Activated CD4-positive, alpha-beta memory T cell treated with anti-CD3 and anti-CD28 coated beads for 36 hours (primary cell): ENCODE measurements at regions of chr15 and their contacts with region 1.

Region 1: DNA sequence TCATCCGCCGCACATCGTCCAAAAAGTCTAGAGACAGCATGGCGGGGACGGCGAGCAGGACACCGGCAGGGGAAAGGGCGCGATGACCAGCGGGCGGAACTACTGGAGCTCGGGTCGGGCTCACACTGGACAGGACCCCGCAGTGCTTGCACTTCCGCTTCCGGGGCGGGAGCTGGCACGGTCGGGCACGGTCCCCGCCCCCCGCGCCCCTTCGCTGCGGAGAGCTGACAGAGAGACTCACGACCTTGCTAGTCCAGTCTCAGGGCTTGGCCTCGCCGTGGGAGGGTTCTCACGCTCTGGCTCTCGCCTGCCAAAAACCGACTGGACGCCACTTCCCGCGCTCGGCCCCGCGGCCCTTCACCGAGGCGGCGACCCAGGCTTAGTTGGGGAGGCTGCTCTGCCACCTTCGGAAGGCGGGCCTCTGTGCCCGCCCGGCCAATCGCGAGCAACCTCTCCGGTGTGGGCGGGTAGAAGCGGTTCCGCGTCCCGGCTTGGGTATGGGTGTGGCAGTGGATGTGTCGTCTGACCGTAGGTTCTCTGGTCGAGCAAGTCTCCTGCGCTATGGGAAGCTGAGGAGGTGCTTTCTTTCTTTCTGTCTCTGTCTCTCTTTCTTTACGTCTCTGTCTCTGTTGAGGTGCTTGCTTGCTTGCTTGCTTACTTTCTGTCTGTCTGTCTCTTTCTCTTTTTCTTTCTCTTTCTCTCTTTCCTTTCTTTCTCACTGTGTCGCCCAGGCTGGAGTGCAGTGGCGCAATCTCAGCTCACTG is at the start of gene SEC11A:
- DNase-seq: peak; percentile 96
- H3K4me3 Mint-ChIP-seq: peak within 1 kb of the TSS; percentile 92
- H3K27ac Mint-ChIP-seq: peak within 1 kb of the TSS; percentile 93
- H3K4me1 Mint-ChIP-seq: peaks cover 46% of the 10 kb centered on the region
- H3K27me3 Mint-ChIP-seq: no peaks in the 10 kb centered on the region
- total RNA-seq, gene SEC11A: 132 to 136 TPM

Region 2: DNA sequence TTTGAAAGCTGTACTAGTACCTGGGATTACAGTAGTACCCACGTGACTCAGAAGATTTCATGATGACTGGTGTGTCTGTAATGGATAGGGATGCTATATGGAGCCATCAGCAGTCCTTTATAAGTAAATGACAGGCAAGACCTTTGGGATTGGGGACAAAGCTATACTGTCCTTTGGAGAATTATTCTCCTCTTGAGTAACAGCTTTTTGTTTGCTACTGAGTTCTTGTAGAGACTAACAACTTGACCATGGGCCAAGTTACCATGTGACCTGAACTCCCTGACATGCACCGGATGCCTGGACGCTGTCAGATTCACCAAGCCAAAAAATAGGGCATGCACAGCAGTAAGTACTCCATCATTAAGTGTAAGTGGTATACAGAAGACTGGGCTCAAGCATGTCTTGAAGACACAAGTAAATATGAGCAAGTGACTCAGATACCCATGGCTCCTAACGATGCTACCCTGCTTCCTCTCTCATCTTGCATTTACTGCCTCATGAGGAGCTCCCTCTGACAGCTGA is 13.2 kb before region 1 on chr15:
- CTCF ChIA-PET with region 1: no interaction called
- POLR2A ChIA-PET with region 1: interaction called, 10 read pairs
- intact Hi-C with region 1: no loop called
- DNase-seq: no peak
- H3K4me3 Mint-ChIP-seq: no peak overlapping the region
- H3K27ac Mint-ChIP-seq: peak overlapping the region; percentile 7
- H3K4me1 Mint-ChIP-seq: peaks cover 67% of the 10 kb centered on the region
- H3K27me3 Mint-ChIP-seq: no peaks in the 10 kb centered on the region

Region 3: GRCh38 chr15:84748274-84749110 is 32.3 kb after region 1 on chr15 and contains the start of gene ZNF592:
- CTCF ChIA-PET with region 1: interaction called, 10 read pairs
- POLR2A ChIA-PET with region 1: interaction called, 10 read pairs
- intact Hi-C with region 1: loop called (anchors 1 kb)
- DNase-seq: peak; percentile 84
- H3K4me3 Mint-ChIP-seq: peak within 1 kb of the TSS; percentile 97
- H3K27ac Mint-ChIP-seq: peak within 1 kb of the TSS; percentile 98
- H3K4me1 Mint-ChIP-seq: peaks cover 57% of the 10 kb centered on the region
- H3K27me3 Mint-ChIP-seq: no peaks in the 10 kb centered on the region
- total RNA-seq, gene ZNF592: 23.8 to 24.3 TPM

Region 4: GRCh38 chr15:84761607-84762131 is 45.5 kb after region 1 on chr15:
- CTCF ChIA-PET with region 1: no interaction called
- POLR2A ChIA-PET with region 1: no interaction called
- intact Hi-C with region 1: loop called (anchors 1 kb)
- DNase-seq: no peak
- H3K4me3 Mint-ChIP-seq: no peak overlapping the region
- H3K27ac Mint-ChIP-seq: no peak overlapping the region
- H3K4me1 Mint-ChIP-seq: peaks cover 22% of the 10 kb centered on the region
- H3K27me3 Mint-ChIP-seq: no peaks in the 10 kb centered on the region

Region 5: GRCh38 chr15:85164809-85165463 is 448.7 kb after region 1 on chr15:
- CTCF ChIA-PET with region 1: no interaction called
- POLR2A ChIA-PET with region 1: no interaction called
- intact Hi-C with region 1: no loop called
- DNase-seq: no peak
- H3K4me3 Mint-ChIP-seq: no peak overlapping the region
- H3K27ac Mint-ChIP-seq: no peak overlapping the region
- H3K4me1 Mint-ChIP-seq: peaks cover 5% of the 10 kb centered on the region
- H3K27me3 Mint-ChIP-seq: peaks cover 6% of the 10 kb centered on the region